Activated CD4-positive, alpha-beta T cell treated with anti-CD3 and anti-CD28 coated beads, Interleukin-2, amount 10 ng/mL, durations not matched to agents 24 days and 14 days (primary cell): ENCODE measurements at regions of chr6 and their contacts with region 1.

Region 1: GRCh38 chr6:27825025-27825793 is 87.0 kb downstream of the OR2B2 start:
- DNase-seq: no peak
- H3K4me3 Mint-ChIP-seq: peak overlapping the region; percentile 91
- H3K27ac Mint-ChIP-seq: peak overlapping the region; percentile 96
- H3K4me1 Mint-ChIP-seq: peaks cover 38% of the 10 kb centered on the region
- H3K27me3 Mint-ChIP-seq: no peaks in the 10 kb centered on the region

Region 2: GRCh38 chr6:27838058-27838944 is 13.1 kb after region 1 on chr6:
- intact Hi-C with region 1: loop called (anchors 1 kb)
- DNase-seq: peak; percentile 96
- H3K4me3 Mint-ChIP-seq: no peak overlapping the region
- H3K27ac Mint-ChIP-seq: no peak overlapping the region
- H3K4me1 Mint-ChIP-seq: peaks cover 28% of the 10 kb centered on the region
- H3K27me3 Mint-ChIP-seq: no peaks in the 10 kb centered on the region

Region 3: DNA sequence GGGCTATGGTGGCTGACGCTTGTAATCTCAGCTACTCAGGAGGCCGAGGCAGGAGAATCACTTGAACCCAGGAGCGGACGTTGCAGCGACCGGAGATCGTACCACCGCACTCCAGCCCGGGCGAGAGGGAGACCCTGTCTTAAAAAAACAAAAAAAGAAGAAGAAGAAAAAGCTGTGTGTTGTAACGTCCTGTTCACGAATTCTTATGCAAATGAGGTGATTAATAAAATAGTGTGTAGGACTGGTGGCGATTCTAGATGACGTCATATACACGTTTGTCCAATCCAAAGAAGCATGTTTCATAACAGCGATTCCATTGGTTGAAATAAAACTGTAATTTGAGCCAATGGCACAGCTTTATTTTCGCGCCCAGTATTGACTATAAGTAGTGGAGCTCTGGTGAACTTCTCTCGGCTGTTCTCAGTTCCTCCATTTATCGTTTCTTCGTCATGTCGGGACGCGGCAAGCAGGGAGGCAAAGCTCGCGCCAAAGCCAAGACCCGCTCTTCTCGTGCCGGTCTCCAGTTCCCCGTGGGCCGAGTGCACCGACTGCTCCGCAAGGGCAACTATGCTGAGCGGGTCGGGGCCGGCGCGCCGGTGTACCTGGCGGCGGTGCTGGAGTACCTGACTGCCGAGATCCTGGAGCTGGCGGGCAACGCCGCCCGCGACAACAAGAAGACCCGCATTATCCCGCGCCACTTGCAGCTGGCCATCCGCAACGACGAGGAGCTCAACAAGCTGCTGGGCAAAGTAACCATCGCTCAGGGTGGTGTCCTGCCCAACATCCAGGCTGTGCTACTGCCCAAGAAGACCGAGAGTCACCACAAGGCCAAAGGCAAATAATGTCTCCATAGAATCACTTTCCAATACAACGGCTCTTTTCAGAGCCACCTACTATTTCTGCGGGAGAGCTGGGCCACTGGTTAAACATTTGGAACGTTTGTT is 40.0 kb after region 1 on chr6:
- intact Hi-C with region 1: loop called (anchors 1 kb)
- DNase-seq: peak; percentile 95
- H3K4me3 Mint-ChIP-seq: peak overlapping the region; percentile 97
- H3K27ac Mint-ChIP-seq: peak overlapping the region; percentile 100
- H3K4me1 Mint-ChIP-seq: peaks cover 58% of the 10 kb centered on the region
- H3K27me3 Mint-ChIP-seq: peaks cover 2% of the 10 kb centered on the region

Region 4: GRCh38 chr6:27871924-27872638 is 46.9 kb after region 1 on chr6:
- intact Hi-C with region 1: loop called (anchors 2 kb)
- DNase-seq: peak; percentile 97
- H3K4me3 Mint-ChIP-seq: peak overlapping the region; percentile 92
- H3K27ac Mint-ChIP-seq: peak overlapping the region; percentile 96
- H3K4me1 Mint-ChIP-seq: peaks cover 56% of the 10 kb centered on the region
- H3K27me3 Mint-ChIP-seq: peaks cover 2% of the 10 kb centered on the region